Activated B cell treated with CpG ODN at 0.5 μM for 24 hours (primary cell): ENCODE measurements at regions of chr5 and their contacts with region 1.

Region 1: GRCh38 chr5:81751009-81751835 is at the start of gene SSBP2:
- DNase-seq: peak; percentile 99
- ATAC-seq: peak; percentile 84
- H3K4me3 Mint-ChIP-seq: peak within 1 kb of the TSS; percentile 95
- H3K27ac Mint-ChIP-seq: peak within 1 kb of the TSS; percentile 97
- H3K4me1 Mint-ChIP-seq: peaks cover 30% of the 10 kb centered on the region
- H3K27me3 Mint-ChIP-seq: no peaks in the 10 kb centered on the region
- CTCF ChIP-seq: no peak
- total RNA-seq, gene SSBP2: 26.2 and 26.4 TPM in 2 replicates

Region 2: GRCh38 chr5:80654391-80655230 is 1096.6 kb before region 1 on chr5 and contains the starts of genes DHFR and MSH3:
- CTCF ChIA-PET with region 1: no interaction called
- POLR2A ChIA-PET with region 1: no interaction called
- intact Hi-C with region 1: loop called (anchors 5 kb)
- DNase-seq: peak; percentile 79
- ATAC-seq: peak; percentile 73
- H3K4me3 Mint-ChIP-seq: peak within 1 kb of the TSS; percentile 97
- H3K27ac Mint-ChIP-seq: peak within 1 kb of the TSS; percentile 99
- H3K4me1 Mint-ChIP-seq: peaks cover 26% of the 10 kb centered on the region
- H3K27me3 Mint-ChIP-seq: no peaks in the 10 kb centered on the region
- CTCF ChIP-seq: no peak
- total RNA-seq, gene DHFR: 11.1 and 12.7 TPM in 2 replicates
- total RNA-seq, gene MSH3: 22.9 and 24.0 TPM in 2 replicates

Region 3: GRCh38 chr5:81513982-81514381 is 237.2 kb before region 1 on chr5:
- CTCF ChIA-PET with region 1: no interaction called
- POLR2A ChIA-PET with region 1: interaction called, 5 read pairs
- intact Hi-C with region 1: loop called (anchors 2 kb)
- DNase-seq: no peak
- ATAC-seq: peak; percentile 49
- H3K4me3 Mint-ChIP-seq: no peak overlapping the region
- H3K27ac Mint-ChIP-seq: no peak overlapping the region
- H3K4me1 Mint-ChIP-seq: no peaks in the 10 kb centered on the region
- H3K27me3 Mint-ChIP-seq: no peaks in the 10 kb centered on the region
- CTCF ChIP-seq: no peak

Region 4: DNA sequence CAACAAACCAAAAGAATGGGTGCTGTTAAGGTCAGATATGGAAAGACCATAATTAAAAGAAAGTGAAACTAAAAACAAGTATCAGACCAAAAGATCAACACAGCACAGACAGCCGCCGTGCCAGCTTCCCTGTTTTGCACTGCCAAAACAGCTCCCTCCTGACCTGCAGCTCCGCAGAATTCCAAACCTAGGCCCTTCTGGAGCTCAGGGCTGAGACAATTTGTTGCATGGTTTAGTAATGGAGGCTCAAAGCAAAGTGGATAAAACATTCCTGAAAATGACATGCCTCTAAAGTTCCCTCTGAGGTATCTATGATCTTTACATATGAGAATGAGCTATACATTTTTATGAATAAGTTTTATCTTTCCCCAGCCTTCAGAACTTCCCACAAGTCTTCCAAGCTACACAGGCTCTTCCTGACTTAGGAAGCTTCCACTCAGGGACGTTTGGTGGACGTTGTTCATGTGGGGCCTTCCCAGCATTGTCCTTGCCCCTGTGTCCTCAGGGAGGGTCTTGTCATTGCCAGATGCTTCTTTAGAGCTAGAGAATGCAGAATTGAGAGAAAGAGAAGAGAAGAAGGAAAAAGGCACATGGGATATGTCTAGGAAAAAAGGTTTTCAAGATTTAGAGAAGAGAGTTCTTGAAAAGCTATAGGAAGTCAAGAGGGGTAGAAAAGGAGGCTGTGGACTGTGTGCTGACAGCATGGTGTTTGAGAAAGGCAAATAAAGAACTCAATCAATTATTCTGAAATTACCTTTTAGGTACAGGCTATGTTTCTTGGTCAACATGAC is 28.1 kb after region 1 on chr5:
- CTCF ChIA-PET with region 1: no interaction called
- POLR2A ChIA-PET with region 1: interaction called, 54 read pairs
- intact Hi-C with region 1: loop called (anchors 1 kb)
- DNase-seq: peak; percentile 26
- ATAC-seq: peak; percentile 94
- H3K4me3 Mint-ChIP-seq: peak overlapping the region; percentile 86
- H3K27ac Mint-ChIP-seq: peak overlapping the region; percentile 95
- H3K4me1 Mint-ChIP-seq: peaks cover 26% of the 10 kb centered on the region
- H3K27me3 Mint-ChIP-seq: no peaks in the 10 kb centered on the region
- CTCF ChIP-seq: no peak

Region 5: GRCh38 chr5:81971712-81972495 is 220.7 kb after region 1 on chr5 and contains the start of gene ATG10:
- CTCF ChIA-PET with region 1: no interaction called
- POLR2A ChIA-PET with region 1: interaction called, 29 read pairs
- intact Hi-C with region 1: loop called (anchors 1 kb)
- DNase-seq: peak; percentile 93
- ATAC-seq: peak; percentile 95
- H3K4me3 Mint-ChIP-seq: peak within 1 kb of the TSS; percentile 88
- H3K27ac Mint-ChIP-seq: peak within 1 kb of the TSS; percentile 86
- H3K4me1 Mint-ChIP-seq: peaks cover 20% of the 10 kb centered on the region
- H3K27me3 Mint-ChIP-seq: no peaks in the 10 kb centered on the region
- CTCF ChIP-seq: no peak
- total RNA-seq, gene ATG10: 5.3 and 7.3 TPM in 2 replicates

Region 6: DNA sequence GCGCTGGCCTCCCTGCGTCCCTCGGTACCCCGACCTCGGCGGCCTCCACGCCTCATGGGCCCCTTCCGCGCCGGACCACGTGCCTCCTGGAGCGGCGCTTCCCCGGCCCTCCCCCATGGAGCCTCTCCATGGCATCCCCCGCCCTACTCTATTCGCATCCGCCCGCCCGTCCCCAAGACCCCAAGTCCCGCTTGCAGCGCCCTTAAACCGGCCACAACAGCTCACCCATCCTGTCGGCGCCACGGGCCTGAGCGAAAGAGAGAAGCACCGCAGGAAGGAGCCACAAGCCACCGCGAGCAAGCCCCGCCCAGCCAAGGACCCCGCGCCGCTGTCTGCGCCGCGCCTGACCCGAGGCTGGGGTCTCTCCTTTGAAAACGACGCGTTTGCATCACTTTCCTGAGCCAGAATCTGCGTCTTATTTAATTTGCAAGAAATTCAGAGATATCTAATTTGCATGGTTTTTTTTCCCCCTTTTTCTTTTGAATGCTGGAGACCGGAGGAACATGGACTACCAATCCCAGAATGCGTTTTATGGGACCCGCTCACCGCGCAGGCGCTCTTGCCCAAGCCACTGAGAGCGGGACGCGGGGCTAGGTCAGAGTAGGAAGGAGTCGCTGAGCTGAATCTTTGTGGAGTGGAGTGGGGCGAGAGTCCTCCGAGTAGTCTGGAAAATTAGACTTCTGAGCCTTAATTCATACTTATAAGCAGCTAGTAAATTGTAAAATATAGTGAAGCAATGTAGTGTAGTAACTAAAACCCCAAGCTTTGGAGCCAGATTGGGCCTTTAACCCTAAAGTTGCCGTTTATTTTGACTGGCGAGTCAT is 527.1 kb after region 1 on chr5 and contains the start of gene RPS23:
- CTCF ChIA-PET with region 1: no interaction called
- POLR2A ChIA-PET with region 1: interaction called, 22 read pairs
- intact Hi-C with region 1: loop called (anchors 1 kb)
- DNase-seq: peak; percentile 79
- ATAC-seq: peak; percentile 92
- H3K4me3 Mint-ChIP-seq: peak within 1 kb of the TSS; percentile 96
- H3K27ac Mint-ChIP-seq: peak within 1 kb of the TSS; percentile 99
- H3K4me1 Mint-ChIP-seq: peaks cover 44% of the 10 kb centered on the region
- H3K27me3 Mint-ChIP-seq: no peaks in the 10 kb centered on the region
- CTCF ChIP-seq: no peak
- total RNA-seq, gene RPS23: 4,125 and 4,753 TPM in 2 replicates